Activated CD4-positive, alpha-beta T cell treated with anti-CD3 and anti-CD28 coated beads for 36 hours (primary cell): ENCODE measurements at regions of chr16 and their contacts with region 1.

Region 1: GRCh38 chr16:11224096-11224893 is 31.7 kb downstream of the SOCS1 start:
- DNase-seq: peak; percentile 88
- ATAC-seq: peak; percentile 55
- H3K4me3 Mint-ChIP-seq: peak overlapping the region; percentile 54
- H3K27ac Mint-ChIP-seq: peak overlapping the region; percentile 98
- H3K4me1 Mint-ChIP-seq: peaks cover 61% of the 10 kb centered on the region
- H3K27me3 Mint-ChIP-seq: no peaks in the 10 kb centered on the region

Region 2: DNA sequence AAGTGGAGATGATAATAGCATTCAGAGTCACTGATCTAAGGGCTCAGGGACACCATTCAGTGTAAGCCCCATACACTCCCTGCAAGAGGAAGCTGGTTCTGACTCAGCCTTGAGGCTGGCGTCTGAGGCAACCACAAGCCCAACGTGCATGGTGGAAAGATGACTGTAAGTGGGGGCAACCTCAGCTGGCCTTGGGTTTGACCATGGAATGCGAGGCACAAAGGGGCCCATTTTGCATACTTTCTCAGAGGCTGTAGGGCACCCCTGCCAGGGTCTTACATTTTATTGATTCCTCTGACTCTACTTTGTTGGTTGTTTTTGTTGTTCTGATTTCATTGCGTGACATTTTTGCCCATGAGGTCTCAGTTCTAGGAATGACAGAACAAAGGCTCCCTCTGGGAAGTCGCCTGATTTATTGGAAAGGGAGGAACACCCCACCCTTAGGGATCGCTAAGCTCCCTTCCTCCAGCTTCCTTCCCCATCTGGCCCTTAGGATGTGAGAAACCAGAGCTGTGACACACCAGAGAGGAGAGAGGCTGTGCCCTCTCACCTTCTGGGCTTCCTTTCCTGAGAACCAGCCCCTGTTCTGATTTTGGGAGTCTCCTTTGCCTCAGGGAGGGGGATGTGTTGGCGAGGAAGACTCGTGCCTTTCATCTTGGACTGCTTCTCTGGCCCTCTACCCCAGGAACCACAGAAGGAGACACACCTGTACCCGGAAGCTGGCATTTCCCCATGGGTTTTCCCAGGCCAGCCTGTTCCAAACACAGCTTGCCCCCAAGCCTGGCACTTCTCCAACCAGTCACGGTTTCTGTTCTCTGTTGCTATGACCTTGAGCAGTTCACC is 352.9 kb before region 1 on chr16:
- CTCF ChIA-PET with region 1: no interaction called
- POLR2A ChIA-PET with region 1: no interaction called
- intact Hi-C with region 1: loop called in 1 of 2 experiments (anchors 2 kb)
- DNase-seq: peak; percentile 87
- ATAC-seq: peak; percentile 92
- H3K4me3 Mint-ChIP-seq: peak overlapping the region; percentile 7
- H3K27ac Mint-ChIP-seq: peak overlapping the region; percentile 71
- H3K4me1 Mint-ChIP-seq: peaks cover 51% of the 10 kb centered on the region
- H3K27me3 Mint-ChIP-seq: peaks cover 43% of the 10 kb centered on the region

Region 3: DNA sequence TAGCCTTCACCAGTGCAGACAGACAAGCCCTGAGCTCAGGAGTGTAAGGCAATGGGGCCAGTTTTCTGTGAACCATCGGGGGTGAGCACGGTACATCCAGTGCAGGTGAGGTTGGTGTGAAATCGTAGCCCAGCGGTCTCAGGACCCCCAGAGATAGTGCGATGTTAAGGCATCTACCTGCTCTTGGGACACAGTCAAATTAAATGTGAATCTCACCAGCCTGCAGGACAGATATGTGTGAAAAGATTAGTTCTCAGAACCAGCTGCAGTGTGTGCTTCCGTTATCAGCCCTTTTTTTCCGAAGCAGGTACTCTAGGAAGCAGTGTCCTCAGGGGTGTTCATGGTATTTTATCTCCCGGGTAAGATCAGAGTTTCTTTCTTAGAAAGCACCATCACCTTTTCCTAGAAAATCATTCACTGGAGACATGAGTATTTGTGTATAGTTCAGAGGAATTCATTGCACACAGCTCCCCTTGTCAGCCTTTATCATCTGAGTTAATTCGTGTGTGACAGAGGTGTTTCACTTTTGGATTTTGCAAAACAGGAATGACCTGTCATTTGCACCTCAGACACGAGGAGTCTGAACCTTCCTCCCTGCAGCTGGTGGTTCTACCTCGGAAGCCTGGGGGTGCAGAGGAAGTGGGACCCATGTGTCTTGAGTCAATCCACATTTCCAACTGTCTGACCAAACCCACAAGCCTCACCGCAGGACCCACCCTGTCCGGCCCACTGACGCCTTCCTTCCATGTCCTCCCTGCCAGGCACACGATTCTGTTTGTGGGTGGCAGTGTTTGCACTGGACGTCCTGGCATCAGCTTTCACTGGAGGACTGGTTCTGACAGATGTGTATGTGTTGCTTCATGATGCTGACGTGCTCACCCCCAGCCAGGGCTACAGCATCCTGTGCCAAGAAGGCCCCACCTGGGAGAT is 172.2 kb before region 1 on chr16:
- CTCF ChIA-PET with region 1: interaction called, 3 read pairs
- POLR2A ChIA-PET with region 1: interaction called, 12 read pairs
- intact Hi-C with region 1: loop called (anchors 1 kb)
- DNase-seq: peak; percentile 85
- ATAC-seq: peak; percentile 89
- H3K4me3 Mint-ChIP-seq: peak overlapping the region; percentile 7
- H3K27ac Mint-ChIP-seq: peak overlapping the region; percentile 75
- H3K4me1 Mint-ChIP-seq: peaks cover 61% of the 10 kb centered on the region
- H3K27me3 Mint-ChIP-seq: no peaks in the 10 kb centered on the region

Region 4: DNA sequence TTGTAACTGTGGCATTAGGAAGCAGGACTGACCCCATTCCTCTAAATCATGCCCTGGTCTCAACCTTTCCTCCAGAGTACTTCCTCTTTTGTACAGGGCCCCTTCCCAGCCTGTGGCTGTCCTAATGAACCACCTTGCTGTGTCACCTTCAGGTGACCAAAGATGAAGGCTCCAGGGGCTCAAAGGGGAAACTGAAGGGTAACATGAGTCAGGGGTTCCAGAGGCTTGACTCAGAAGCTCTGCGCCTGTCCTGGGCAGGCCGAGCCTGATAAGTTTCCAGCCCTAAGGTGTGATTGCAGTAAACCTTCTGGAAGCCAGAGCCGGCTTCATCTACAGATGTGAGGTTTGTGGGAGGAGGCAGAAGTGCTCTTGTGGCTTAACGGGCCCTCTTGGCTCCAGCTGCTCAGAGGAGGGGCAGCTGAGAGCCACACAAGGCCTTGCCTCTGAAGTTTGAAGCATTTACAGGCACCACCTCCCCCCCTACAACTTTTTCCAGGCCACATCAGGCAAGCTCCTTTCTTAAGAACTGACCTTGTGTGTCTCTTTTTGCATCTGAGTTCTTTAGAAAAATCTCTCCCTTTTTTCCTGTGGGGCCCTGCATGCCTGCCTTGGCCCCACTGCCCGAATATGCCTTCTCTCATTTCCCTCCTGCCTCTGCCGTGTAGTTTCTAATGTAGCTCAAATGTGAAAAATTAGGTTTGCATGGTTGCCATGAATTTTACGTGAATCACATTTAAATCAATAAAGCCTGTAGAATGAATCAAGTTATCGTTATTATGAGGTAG is 130.0 kb before region 1 on chr16:
- CTCF ChIA-PET with region 1: interaction called, 18 read pairs
- POLR2A ChIA-PET with region 1: interaction called, 32 read pairs
- intact Hi-C with region 1: loop called (anchors 1 to 2 kb)
- DNase-seq: peak; percentile 87
- ATAC-seq: peak; percentile 77
- H3K4me3 Mint-ChIP-seq: peak overlapping the region; percentile 53
- H3K27ac Mint-ChIP-seq: peak overlapping the region; percentile 99
- H3K4me1 Mint-ChIP-seq: peaks cover 86% of the 10 kb centered on the region
- H3K27me3 Mint-ChIP-seq: no peaks in the 10 kb centered on the region

Region 5: GRCh38 chr16:11181899-11182279 is 42.4 kb before region 1 on chr16:
- CTCF ChIA-PET with region 1: interaction called, 3 read pairs
- POLR2A ChIA-PET with region 1: no interaction called
- intact Hi-C with region 1: loop called (anchors 2 to 5 kb)
- DNase-seq: peak; percentile 60
- ATAC-seq: peak; percentile 69
- H3K4me3 Mint-ChIP-seq: no peak overlapping the region
- H3K27ac Mint-ChIP-seq: peak overlapping the region; percentile 76
- H3K4me1 Mint-ChIP-seq: peaks cover 40% of the 10 kb centered on the region
- H3K27me3 Mint-ChIP-seq: no peaks in the 10 kb centered on the region

Region 6: DNA sequence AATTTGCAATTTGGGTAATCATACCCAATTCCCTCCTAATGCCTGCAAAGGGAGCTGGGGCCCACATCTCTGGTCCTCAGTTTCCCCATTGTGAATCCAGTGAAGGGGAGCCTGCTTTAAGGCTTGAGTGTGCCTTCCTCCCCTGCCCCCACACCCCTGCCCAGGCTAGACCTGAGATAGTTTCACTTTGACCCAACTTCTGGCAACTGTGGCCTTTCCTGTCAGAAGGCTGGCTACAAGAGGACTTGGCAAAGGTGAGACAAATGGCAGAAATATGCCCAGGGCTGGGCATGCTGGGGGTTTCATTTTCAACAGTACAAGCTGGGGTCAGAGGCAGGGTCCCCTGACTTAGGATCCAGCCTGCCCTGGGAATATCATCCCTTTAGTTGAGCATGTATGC is 21.7 kb after region 1 on chr16:
- CTCF ChIA-PET with region 1: interaction called, 6 read pairs
- POLR2A ChIA-PET with region 1: interaction called, 50 read pairs
- intact Hi-C with region 1: no loop called
- DNase-seq: peak; percentile 61
- ATAC-seq: peak; percentile 24
- H3K4me3 Mint-ChIP-seq: no peak overlapping the region
- H3K27ac Mint-ChIP-seq: no peak overlapping the region
- H3K4me1 Mint-ChIP-seq: peaks cover 43% of the 10 kb centered on the region
- H3K27me3 Mint-ChIP-seq: no peaks in the 10 kb centered on the region

Region 7: GRCh38 chr16:11356573-11357331 is 132.5 kb after region 1 on chr16:
- CTCF ChIA-PET with region 1: no interaction called
- POLR2A ChIA-PET with region 1: interaction called, 7 read pairs
- intact Hi-C with region 1: loop called in 1 of 2 experiments (anchors 2 kb)
- DNase-seq: peak; percentile 79
- ATAC-seq: no peak
- H3K4me3 Mint-ChIP-seq: peak overlapping the region; percentile 46
- H3K27ac Mint-ChIP-seq: peak overlapping the region; percentile 23
- H3K4me1 Mint-ChIP-seq: peaks cover 67% of the 10 kb centered on the region
- H3K27me3 Mint-ChIP-seq: peaks cover 7% of the 10 kb centered on the region

Region 8: DNA sequence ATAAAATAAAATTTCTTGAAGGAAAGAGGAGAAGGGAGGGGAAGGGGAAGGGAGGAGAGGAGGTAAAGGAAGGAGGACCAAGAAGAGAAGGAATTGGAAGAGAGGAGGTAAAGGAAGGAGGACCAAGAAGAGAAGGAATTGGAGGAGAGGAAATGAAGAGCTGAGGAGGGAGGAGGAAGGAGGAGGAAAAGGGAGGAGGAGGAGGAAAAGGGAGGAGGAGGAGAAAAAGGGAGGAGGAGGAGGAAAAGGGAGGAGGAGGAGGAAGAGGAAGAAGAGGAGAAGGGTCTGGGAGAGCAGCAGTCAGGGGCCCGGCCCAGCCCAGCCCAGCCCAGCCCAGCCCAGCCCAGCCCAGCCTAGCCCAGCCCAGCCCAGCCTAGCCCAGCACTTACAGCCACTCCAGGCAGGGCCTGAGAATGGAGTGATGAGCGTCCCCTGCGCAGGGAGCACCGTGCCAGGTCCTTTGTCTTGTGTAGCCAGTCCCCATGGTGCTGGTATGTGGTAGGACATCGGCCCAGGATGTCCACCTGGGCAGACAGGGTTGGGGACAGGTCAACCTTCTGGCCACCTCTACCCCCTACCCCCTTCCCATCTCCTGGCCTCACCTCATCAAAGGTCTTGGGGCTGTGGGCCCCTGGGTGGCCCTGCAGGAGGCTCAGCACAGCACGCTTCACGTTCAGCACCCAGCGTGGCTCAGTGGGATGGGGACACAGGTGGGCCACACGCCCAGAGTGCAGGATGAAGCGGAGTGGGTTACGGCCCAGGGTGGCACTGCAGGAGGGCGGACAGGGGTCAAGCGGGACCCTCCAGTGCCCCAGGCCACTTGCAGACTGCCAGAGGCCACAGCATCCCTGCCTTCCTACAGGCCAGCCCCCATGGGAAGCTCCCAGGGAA is 291.5 kb after region 1 on chr16:
- CTCF ChIA-PET with region 1: no interaction called
- POLR2A ChIA-PET with region 1: no interaction called
- intact Hi-C with region 1: no loop called
- DNase-seq: no peak
- ATAC-seq: no peak
- H3K4me3 Mint-ChIP-seq: no peak overlapping the region
- H3K27ac Mint-ChIP-seq: no peak overlapping the region
- H3K4me1 Mint-ChIP-seq: no peaks in the 10 kb centered on the region
- H3K27me3 Mint-ChIP-seq: no peaks in the 10 kb centered on the region